ENCODE measurements at regions of chr1 and their contacts with region 1.

Region 1: DNA sequence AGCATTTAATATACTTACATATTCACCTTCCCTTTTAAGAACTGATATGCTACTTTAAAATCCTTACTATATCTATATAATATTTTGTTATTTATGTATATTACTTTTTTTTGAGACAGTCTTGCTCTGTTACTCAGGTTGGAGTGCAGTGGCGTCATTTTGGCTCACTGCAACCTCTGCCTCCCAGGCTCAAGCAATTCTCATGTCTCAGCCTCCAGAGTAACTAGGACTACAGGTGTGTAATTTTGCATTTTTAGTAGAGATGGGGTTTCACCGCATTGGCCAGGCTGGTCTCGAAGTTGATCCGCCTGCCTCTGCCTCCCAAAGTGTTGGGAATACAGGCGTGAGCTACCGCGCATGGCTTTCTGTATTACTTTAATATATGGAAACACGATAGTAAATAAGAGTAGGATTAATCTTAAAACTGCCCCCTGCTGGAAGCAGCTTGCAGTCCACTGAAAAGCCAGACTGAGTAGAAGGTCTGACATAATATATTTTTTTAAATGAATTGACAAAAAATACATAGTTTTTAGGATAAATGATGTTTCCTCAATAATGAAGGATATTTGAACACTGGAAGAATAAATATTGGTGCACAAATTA is 24.4 kb downstream of the RCAN3 start:
- DNase-seq: no peak
- ATAC-seq: no peak
- H3K4me3 ChIP-seq: no peak overlapping the region
- H3K27ac ChIP-seq: no peak overlapping the region
- H3K4me1 ChIP-seq: no peaks in the 10 kb centered on the region
- H3K27me3 ChIP-seq: no peaks in the 10 kb centered on the region
- CTCF ChIP-seq: peak in 8 of 9 donors; percentile 35 to 64 (median 50)

Region 2: DNA sequence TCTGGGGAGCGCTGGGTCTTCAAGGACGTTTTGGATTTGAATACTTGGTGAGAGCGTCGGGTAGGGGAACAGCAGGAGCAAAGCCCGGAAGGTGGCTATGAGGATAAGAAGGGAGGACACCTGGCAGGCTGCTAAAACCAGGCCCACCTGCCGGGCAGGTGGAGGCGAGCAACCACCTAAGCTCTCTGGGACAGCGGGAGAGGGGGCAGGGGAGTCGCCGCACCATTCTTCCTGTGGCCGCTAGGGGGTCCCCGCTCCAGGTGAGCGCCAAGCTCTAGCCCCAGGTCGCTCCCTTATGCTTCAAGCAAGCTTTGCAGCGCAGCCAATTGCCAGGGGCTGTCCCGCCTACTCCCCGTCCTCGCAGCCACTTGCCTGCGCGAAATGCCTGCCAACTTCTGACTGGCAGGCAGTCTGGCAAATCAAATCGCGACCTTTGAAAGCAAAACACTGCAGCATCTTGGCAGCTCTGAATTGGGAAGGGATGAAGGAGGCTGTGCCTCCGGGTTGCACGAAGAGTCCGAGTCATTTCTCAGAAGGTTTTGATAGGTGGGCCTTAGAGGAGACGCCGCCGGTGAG is 111.6 kb before region 1 on chr1 and contains the start of gene NIPAL3:
- intact Hi-C with region 1: loop called in 3 of 10 experiments (anchors 5 to 10 kb)
- DNase-seq: peak; percentile 96 to 99
- ATAC-seq: peak; percentile 94 to 98 (median 96)
- H3K4me3 ChIP-seq: peak within 1 kb of the TSS; percentile 50 to 84 (median 74)
- H3K27ac ChIP-seq: peak within 1 kb of the TSS in 8 of 10 donors; percentile 3 to 75 (median 33)
- H3K4me1 ChIP-seq: peaks cover 7 to 51% (median 27%) of the 10 kb centered on the region in 9 donors
- H3K27me3 ChIP-seq: no peaks in the 10 kb centered on the region
- CTCF ChIP-seq: peak; percentile 77 to 83 (median 81)
- total RNA-seq, gene NIPAL3: 21.5 to 44.9 (median 27.2) TPM

Region 3: DNA sequence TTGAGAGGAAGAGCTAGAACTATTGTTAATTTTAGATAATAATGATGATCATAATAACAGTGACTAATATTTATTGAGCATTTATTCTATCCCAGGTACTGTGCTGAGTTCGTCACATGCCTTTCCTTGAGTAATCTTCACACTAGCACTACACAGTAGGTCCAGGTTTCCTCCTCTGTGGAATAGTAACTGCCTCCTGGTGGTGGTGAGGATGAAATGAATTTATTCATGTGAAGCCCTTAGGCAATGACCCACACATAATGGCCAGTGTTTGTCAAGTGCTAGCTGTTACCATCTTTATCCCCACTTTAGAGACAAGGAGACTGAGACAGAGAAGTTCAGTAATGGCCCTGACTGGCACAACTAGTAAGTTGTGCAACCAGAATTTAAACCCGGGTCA is 105.5 kb before region 1 on chr1:
- intact Hi-C with region 1: loop called in 3 of 10 experiments (anchors 5 to 10 kb)
- DNase-seq: no peak
- ATAC-seq: no peak
- H3K4me3 ChIP-seq: no peak overlapping the region
- H3K27ac ChIP-seq: no peak overlapping the region
- H3K4me1 ChIP-seq: peaks cover 0 to 31% (median 18%) of the 10 kb centered on the region in 9 donors
- H3K27me3 ChIP-seq: no peaks in the 10 kb centered on the region
- CTCF ChIP-seq: no peak

Region 4: GRCh38 chr1:24438423-24438901 is 88.6 kb before region 1 on chr1:
- intact Hi-C with region 1: loop called in 1 of 10 experiments (anchors 10 kb)
- DNase-seq: peak; percentile 59 to 67
- ATAC-seq: peak; percentile 78 to 92 (median 86)
- H3K4me3 ChIP-seq: peak overlapping the region in 2 of 10 donors; percentile 10 to 13
- H3K27ac ChIP-seq: peak overlapping the region in 6 of 10 donors; percentile 43 to 70 (median 56)
- H3K4me1 ChIP-seq: peaks cover 2 to 41% (median 21%) of the 10 kb centered on the region in 9 donors
- H3K27me3 ChIP-seq: no peaks in the 10 kb centered on the region
- CTCF ChIP-seq: peak in 1 of 9 donors; percentile 3

Region 5: DNA sequence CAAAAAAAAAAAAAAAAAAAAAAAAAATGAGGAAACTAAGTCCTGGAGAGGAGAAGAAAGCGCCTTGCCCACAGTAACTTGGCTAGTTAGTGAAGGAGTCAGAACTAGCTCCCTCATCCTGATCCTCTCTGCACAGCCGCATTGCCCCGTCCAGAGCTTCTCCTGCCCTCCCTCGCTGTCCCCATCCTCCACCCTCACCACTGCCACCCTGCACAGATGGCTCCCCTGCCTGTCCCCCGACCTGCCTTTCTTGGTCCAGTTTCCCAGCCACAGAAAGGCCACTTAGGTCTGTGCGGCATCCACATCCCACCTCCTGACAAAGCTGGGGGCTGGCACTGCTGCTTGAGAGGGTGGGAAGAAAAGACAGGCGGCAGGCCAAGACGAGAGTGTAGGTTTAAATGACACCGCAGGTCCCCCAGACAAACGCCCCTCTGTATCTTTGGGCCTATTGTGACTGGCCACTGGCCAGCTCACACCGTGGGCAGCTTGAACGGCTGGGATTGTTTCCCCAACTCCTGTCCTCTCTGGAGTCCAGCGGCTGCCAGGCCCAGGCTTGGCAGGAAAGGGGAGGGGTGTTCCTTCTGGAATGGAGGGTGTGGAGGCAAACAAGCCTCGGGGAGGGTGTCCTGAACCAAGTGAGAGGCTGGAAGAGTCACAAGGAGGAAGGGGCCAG is 49.0 kb after region 1 on chr1:
- intact Hi-C with region 1: no loop called
- DNase-seq: peak in 1 of 2 donors; percentile 18
- ATAC-seq: peak in 2 of 8 donors; percentile 29 to 42
- H3K4me3 ChIP-seq: no peak overlapping the region
- H3K27ac ChIP-seq: no peak overlapping the region
- H3K4me1 ChIP-seq: peaks cover 0 to 4% (median 0%) of the 10 kb centered on the region in 9 donors
- H3K27me3 ChIP-seq: no peaks in the 10 kb centered on the region
- CTCF ChIP-seq: no peak

Measured in heart right ventricle (tissue), 16 donors.